ENCODE measurements at regions of chr18 and their contacts with region 1.

Region 1: DNA sequence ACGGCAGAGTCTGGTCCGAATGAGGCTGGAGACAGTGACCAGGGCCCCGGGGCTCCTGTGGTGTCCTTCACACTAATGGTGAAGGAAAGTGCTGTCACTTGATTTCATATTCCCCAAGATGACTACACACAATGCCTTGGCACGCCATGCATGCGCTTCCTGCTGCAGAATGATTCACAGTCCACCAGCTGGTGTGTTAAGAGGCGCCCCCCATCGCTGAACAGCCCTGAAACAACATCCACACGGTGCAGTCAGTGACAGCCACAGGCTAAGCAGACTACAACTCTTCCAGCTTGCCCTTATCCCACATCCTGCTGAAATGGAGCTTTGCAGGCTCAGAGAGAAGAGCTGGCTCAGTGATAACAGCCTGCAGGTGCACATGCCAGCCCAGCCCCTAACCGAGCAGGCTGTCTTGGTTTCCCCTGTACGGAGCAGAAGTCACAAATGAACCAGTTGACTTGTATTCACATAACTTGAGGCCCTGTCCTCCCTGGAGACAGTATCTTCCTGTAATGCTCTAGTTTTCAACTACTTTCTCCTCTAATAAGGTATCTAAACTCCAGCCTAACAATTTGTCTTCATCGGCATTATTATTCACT is 24.3 kb upstream of the CDH20 start:
- DNase-seq: no peak
- H3K4me3 ChIP-seq: no peak overlapping the region
- CTCF ChIP-seq: no peak
- POLR2A ChIP-seq: no peak

Region 2: GRCh38 chr18:60110836-60111235 is 1198.1 kb before region 1 on chr18:
- intact Hi-C with region 1: loop called (anchors 5 kb)
- DNase-seq: no peak
- H3K4me3 ChIP-seq: no peak overlapping the region
- CTCF ChIP-seq: no peak
- POLR2A ChIP-seq: no peak

Region 3: DNA sequence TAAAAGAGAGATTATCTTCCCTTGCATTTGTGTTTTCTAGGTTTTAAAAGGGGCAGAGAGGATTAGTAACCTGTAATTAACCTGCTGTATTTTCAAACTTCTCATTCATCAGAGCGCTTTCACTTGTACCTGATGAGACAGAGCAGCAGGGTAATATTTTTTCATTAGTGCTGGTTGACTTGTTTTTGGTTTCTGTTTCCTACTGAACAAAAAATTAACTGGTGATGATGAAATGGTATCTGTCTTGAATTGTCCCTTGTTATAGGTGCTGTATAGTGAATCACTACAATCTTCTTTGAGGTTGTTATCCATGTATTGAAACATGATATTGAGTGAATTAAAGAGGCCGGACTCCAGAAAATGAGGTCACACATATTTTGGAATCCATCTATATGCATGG is 62.2 kb after region 1 on chr18:
- intact Hi-C with region 1: no loop called
- DNase-seq: no peak
- H3K4me3 ChIP-seq: no peak overlapping the region
- CTCF ChIP-seq: no peak
- POLR2A ChIP-seq: no peak

Measured in lower leg skin (tissue), 4 donors.